Astrocyte of the cerebellum (primary cell): ENCODE measurements at regions of chrX and their contacts with region 1.

Region 1: GRCh38 chrX:3176439-3176820 is 135.2 kb downstream of the ARSF start:
- DNase-seq: peak; percentile 86
- H3K4me3 ChIP-seq: no peak overlapping the region
- CTCF ChIP-seq: no peak

Region 2: DNA sequence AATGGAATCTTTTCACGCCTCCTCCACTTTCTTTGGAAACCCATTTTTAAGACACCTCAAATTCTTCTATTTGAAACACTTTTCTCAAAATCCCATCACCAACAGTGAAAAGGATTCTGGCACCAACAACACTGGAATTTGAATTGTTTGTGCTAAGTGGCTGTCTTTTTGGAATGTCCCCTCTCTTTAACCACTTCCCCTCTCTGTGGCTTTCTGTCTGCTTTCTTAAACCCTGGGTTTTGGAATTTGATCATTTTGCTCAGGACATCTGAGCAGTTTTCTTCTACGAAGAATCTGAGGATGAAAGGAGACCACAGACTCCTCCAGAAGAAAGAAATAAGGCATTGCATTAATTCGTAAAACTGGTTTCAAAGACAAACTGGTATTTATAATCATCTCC is 81.0 kb after region 1 on chrX:
- in situ Hi-C with region 1: loop called (anchors 5 kb)
- DNase-seq: peak; percentile 12
- H3K4me3 ChIP-seq: no peak overlapping the region
- CTCF ChIP-seq: no peak